CD8-positive, alpha-beta T cell (primary cell): ENCODE measurements at regions of chr15 and their contacts with region 1.

Region 1: GRCh38 chr15:41557673-41558399 is 1.2 kb upstream of the TYRO3 start:
- DNase-seq: peak; percentile 47 to 90 (median 77)
- ATAC-seq: peak; percentile 88
- H3K4me3 ChIP-seq: peak overlapping the region; percentile 4 to 41
- H3K4me3 Mint-ChIP-seq: peak overlapping the region; percentile 86
- H3K27ac ChIP-seq: peak overlapping the region in 1 of 2 experiments; percentile 69
- H3K27ac Mint-ChIP-seq: peak overlapping the region; percentile 84
- H3K4me1 ChIP-seq: peaks cover 19% of the 10 kb centered on the region
- H3K4me1 Mint-ChIP-seq: peaks cover 14% of the 10 kb centered on the region
- H3K27me3 ChIP-seq: peaks cover 6 to 10% of the 10 kb centered on the region in 2 experiments
- H3K27me3 Mint-ChIP-seq: peaks cover 18% of the 10 kb centered on the region
- CTCF ChIP-seq: peak; percentile 88

Region 2: DNA sequence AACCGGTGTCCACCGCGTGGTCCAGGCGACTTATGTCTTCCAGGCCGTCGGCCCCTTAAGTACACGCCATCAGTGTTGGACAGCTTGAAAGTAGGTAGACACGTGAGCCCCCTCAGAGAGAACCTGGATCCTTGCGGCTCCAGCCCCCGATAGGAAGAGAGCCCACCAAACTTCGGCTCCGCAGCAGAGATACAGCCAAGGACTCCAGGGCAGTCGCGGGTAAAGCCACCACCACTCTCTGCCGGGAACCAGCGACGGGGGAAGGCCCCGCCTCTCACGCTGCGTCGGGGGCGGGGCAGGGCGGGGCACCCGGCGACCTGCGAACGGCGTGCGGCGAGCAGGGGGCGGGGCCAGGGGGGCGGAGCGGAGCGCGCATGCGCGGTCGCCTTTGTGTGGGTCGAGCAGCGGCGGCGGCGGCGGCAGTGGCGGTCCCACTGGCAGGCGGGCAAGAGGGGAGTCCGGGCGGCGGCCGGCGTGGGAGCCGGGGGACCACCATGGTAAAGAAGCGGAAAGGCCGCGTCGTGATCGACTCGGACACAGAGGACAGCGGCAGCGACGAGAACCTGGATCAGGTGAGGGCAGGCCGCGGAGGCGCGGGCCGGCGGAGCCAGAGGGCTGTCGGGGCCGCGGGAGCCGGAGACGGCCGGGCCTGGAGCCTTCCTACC is 141.0 kb before region 1 on chr15 and contains the start of gene RTF1:
- CTCF ChIA-PET with region 1: no interaction called
- POLR2A ChIA-PET with region 1: no interaction called
- intact Hi-C with region 1: no loop called
- DNase-seq: peak; percentile 94 to 99 (median 98)
- ATAC-seq: peak; percentile 98
- H3K4me3 ChIP-seq: peak within 1 kb of the TSS; percentile 79 to 91
- H3K4me3 Mint-ChIP-seq: peak within 1 kb of the TSS; percentile 93
- H3K27ac ChIP-seq: peak within 1 kb of the TSS; percentile 64 to 76
- H3K27ac Mint-ChIP-seq: peak within 1 kb of the TSS; percentile 94
- H3K4me1 ChIP-seq: peaks cover 30% of the 10 kb centered on the region
- H3K4me1 Mint-ChIP-seq: peaks cover 43% of the 10 kb centered on the region
- H3K27me3 ChIP-seq: no peaks in the 10 kb centered on the region
- H3K27me3 Mint-ChIP-seq: no peaks in the 10 kb centered on the region
- CTCF ChIP-seq: no peak
- total RNA-seq, gene RTF1: 33.2 to 41.6 TPM

Region 3: GRCh38 chr15:41493205-41493901 is 64.5 kb before region 1 on chr15 and contains the start of gene ITPKA:
- CTCF ChIA-PET with region 1: interaction called, 3 read pairs
- POLR2A ChIA-PET with region 1: no interaction called
- intact Hi-C with region 1: loop called (anchors 1 to 5 kb)
- DNase-seq: peak; percentile 38 to 87 (median 74)
- ATAC-seq: peak; percentile 82
- H3K4me3 ChIP-seq: peak within 1 kb of the TSS; percentile 64 to 75
- H3K4me3 Mint-ChIP-seq: peak within 1 kb of the TSS; percentile 79
- H3K27ac ChIP-seq: no peak within 1 kb of the TSS
- H3K27ac Mint-ChIP-seq: no peak within 1 kb of the TSS
- H3K4me1 ChIP-seq: peaks cover 31% of the 10 kb centered on the region
- H3K4me1 Mint-ChIP-seq: peaks cover 15% of the 10 kb centered on the region
- H3K27me3 ChIP-seq: peaks cover 33 to 54% of the 10 kb centered on the region in 2 experiments
- H3K27me3 Mint-ChIP-seq: peaks cover 38% of the 10 kb centered on the region
- CTCF ChIP-seq: no peak
- total RNA-seq, gene ITPKA: 0.50 TPM in 1 of 2 experiments, not detected in the other

Region 4: DNA sequence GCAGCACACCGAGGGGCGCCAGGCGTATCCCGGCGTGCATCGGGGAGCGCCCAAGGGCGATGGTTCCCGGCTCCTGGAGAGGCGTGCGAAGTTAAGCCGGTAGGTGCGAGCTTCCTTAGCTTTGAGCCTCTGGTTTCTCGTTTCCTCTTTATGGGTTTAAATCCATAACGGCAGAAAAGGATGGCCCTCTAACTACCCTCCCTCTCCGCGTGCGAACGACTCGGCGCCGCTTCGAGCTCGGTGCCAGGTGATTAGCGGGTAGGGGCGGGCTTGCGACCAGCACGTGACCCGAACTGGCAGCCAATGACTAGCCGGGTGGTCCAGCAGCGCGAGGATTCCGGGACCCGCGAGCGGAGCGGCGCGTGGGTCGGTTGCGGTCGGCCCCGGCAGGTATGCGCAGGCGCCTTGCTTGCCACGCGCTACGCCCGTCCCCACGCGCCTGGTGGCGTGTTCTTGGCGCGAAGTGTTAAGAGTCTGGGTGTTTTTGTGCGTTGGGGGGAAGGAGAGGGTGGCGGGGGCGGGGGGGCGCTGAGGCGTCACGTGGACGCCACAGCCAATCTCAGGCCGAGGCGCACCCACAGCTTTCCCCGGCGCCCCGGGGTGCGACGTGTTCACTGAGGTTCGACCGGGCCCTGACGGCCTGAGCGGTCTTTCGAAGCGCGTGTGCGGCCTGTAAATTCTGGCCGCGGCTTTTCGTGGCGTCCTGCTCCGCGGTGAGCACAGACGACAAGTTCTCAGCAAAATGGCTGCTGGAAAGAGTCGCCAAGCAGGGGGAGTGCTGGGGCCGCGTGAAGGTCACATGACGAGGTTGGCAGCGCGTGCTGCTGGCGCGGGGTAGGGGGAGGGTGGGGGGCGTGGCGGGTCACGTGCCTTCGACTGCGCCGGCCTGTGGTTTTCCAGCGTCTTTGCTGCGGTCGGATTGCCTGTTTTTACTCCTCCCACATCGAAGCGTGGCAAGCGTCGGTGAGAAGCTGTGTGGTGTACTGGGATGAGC is 63.7 kb after region 1 on chr15:
- CTCF ChIA-PET with region 1: no interaction called
- POLR2A ChIA-PET with region 1: no interaction called
- intact Hi-C with region 1: loop called (anchors 1 to 5 kb)
- DNase-seq: peak; percentile 47 to 88 (median 77)
- ATAC-seq: peak; percentile 79
- H3K4me3 ChIP-seq: peak overlapping the region; percentile 39 to 52
- H3K4me3 Mint-ChIP-seq: peak overlapping the region; percentile 72
- H3K27ac ChIP-seq: peak overlapping the region; percentile 11 to 54
- H3K27ac Mint-ChIP-seq: peak overlapping the region; percentile 57
- H3K4me1 ChIP-seq: peaks cover 13% of the 10 kb centered on the region
- H3K4me1 Mint-ChIP-seq: peaks cover 17% of the 10 kb centered on the region
- H3K27me3 ChIP-seq: no peaks in the 10 kb centered on the region
- H3K27me3 Mint-ChIP-seq: no peaks in the 10 kb centered on the region
- CTCF ChIP-seq: no peak

Region 5: GRCh38 chr15:41827880-41828806 is 270.3 kb after region 1 on chr15 and contains the start of gene JMJD7:
- CTCF ChIA-PET with region 1: no interaction called
- POLR2A ChIA-PET with region 1: no interaction called
- intact Hi-C with region 1: loop called (anchors 5 kb)
- DNase-seq: peak; percentile 93 to 98 (median 95)
- ATAC-seq: peak; percentile 97
- H3K4me3 ChIP-seq: peak within 1 kb of the TSS; percentile 93 to 95
- H3K4me3 Mint-ChIP-seq: peak within 1 kb of the TSS; percentile 83
- H3K27ac ChIP-seq: peak within 1 kb of the TSS; percentile 74 to 87
- H3K27ac Mint-ChIP-seq: peak within 1 kb of the TSS; percentile 87
- H3K4me1 ChIP-seq: peaks cover 35% of the 10 kb centered on the region
- H3K4me1 Mint-ChIP-seq: peaks cover 44% of the 10 kb centered on the region
- H3K27me3 ChIP-seq: no peaks in the 10 kb centered on the region
- H3K27me3 Mint-ChIP-seq: no peaks in the 10 kb centered on the region
- CTCF ChIP-seq: no peak
- total RNA-seq, gene JMJD7: 27.5 to 38.3 TPM

Region 6: DNA sequence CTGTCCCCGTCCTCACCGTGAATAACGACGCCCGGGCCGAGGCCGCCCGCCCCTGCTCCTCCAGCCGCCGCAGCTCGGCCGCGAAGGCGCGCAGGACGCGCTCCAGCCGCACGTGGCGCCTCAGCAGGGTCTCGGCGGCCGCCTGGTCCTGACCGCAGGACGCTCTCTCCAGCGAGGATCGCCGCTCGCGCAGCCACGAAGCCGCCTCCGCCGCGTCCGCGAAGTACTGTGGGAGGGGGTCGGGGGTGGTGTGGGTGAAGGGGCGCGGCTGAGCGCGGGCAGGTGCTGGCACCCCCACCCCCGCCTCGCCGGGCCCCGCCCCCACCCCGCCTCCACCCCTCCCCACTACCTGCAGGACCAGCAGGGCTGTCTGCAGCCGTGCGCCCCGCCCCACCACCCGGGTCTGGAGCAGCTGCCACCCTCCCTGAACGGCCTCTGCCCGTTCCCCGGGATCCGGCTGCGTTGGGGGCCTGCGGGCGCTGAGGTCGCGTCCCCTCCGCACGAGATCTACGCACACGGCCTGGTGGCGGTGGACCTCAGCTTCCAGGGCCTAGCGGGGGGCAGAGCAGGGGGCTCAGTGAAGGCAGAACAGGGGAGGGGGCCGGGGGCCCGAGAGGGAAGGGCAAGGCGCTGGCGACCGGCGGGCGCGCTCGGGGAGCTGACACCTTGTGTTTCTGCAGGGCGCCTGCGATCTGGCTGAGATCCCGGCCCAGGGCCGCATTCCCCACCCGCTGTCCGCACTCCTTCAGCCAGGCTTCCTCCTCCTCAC is 324.3 kb after region 1 on chr15:
- CTCF ChIA-PET with region 1: no interaction called
- POLR2A ChIA-PET with region 1: no interaction called
- intact Hi-C with region 1: no loop called
- DNase-seq: peak in 2 of 9 experiments; percentile 24 to 30
- ATAC-seq: peak; percentile 49
- H3K4me3 ChIP-seq: no peak overlapping the region
- H3K4me3 Mint-ChIP-seq: peak overlapping the region; percentile 45
- H3K27ac ChIP-seq: no peak overlapping the region
- H3K27ac Mint-ChIP-seq: no peak overlapping the region
- H3K4me1 ChIP-seq: peaks cover 8% of the 10 kb centered on the region
- H3K4me1 Mint-ChIP-seq: peaks cover 8% of the 10 kb centered on the region
- H3K27me3 ChIP-seq: peaks cover 0 to 5% of the 10 kb centered on the region in 2 experiments
- H3K27me3 Mint-ChIP-seq: peaks cover 12% of the 10 kb centered on the region
- CTCF ChIP-seq: no peak